ENCODE measurements at regions of chr2 and their contacts with region 1.

Region 1: GRCh38 chr2:224927646-224928173 is 114.6 kb downstream of the DOCK10 start:
- DNase-seq: peak; percentile 64
- H3K4me3 Mint-ChIP-seq: peak overlapping the region; percentile 46
- H3K27ac Mint-ChIP-seq: peak overlapping the region; percentile 99
- H3K4me1 Mint-ChIP-seq: peaks cover 93% of the 10 kb centered on the region
- H3K27me3 Mint-ChIP-seq: no peaks in the 10 kb centered on the region

Region 2: GRCh38 chr2:224520064-224520463 is 407.6 kb before region 1 on chr2:
- intact Hi-C with region 1: loop called (anchors 5 kb)
- DNase-seq: peak; percentile 26
- H3K4me3 Mint-ChIP-seq: no peak overlapping the region
- H3K27ac Mint-ChIP-seq: peak overlapping the region; percentile 70
- H3K4me1 Mint-ChIP-seq: peaks cover 54% of the 10 kb centered on the region
- H3K27me3 Mint-ChIP-seq: no peaks in the 10 kb centered on the region

Region 3: GRCh38 chr2:224904381-224904780 is 23.3 kb before region 1 on chr2:
- intact Hi-C with region 1: no loop called
- DNase-seq: no peak
- H3K4me3 Mint-ChIP-seq: no peak overlapping the region
- H3K27ac Mint-ChIP-seq: no peak overlapping the region
- H3K4me1 Mint-ChIP-seq: peaks cover 40% of the 10 kb centered on the region
- H3K27me3 Mint-ChIP-seq: no peaks in the 10 kb centered on the region

Region 4: DNA sequence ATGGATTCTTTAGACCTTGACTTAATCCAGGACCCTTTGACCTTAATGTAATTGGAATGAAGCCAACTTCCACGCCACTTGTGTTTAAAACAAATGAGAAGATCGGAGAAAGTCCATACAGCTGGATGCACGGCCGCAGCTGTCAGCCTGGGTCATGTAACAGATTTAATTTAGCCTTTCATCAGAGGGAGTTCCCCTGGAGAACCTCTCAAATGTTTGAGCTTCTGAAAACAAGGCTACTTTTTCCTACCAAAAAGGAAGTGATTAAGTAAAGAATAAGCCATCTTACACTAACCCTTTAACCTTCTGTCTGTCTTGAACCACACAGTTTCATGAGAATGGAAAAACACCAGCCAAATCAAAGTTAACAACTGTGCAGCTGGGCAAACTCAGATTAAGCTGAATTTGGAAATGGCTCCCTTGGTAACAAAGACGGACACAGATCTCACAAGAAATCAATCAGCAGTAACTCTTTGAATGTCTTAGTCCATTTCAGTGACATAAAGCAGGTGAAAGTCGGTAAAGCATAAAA is 11.0 kb after region 1 on chr2:
- intact Hi-C with region 1: loop called (anchors 1 kb)
- DNase-seq: no peak
- H3K4me3 Mint-ChIP-seq: peak overlapping the region; percentile 62
- H3K27ac Mint-ChIP-seq: peak overlapping the region; percentile 80
- H3K4me1 Mint-ChIP-seq: peaks cover 74% of the 10 kb centered on the region
- H3K27me3 Mint-ChIP-seq: no peaks in the 10 kb centered on the region

Region 5: GRCh38 chr2:225002039-225002655 is 74.4 kb after region 1 on chr2:
- intact Hi-C with region 1: loop called (anchors 1 kb)
- DNase-seq: peak; percentile 54
- H3K4me3 Mint-ChIP-seq: no peak overlapping the region
- H3K27ac Mint-ChIP-seq: peak overlapping the region; percentile 77
- H3K4me1 Mint-ChIP-seq: peaks cover 70% of the 10 kb centered on the region
- H3K27me3 Mint-ChIP-seq: no peaks in the 10 kb centered on the region

Region 6: GRCh38 chr2:225041851-225042799 is 114.4 kb after region 1 on chr2 and contains the start of gene DOCK10:
- intact Hi-C with region 1: loop called (anchors 2 kb)
- DNase-seq: peak; percentile 40
- H3K4me3 Mint-ChIP-seq: peak within 1 kb of the TSS; percentile 91
- H3K27ac Mint-ChIP-seq: peak within 1 kb of the TSS; percentile 92
- H3K4me1 Mint-ChIP-seq: peaks cover 54% of the 10 kb centered on the region
- H3K27me3 Mint-ChIP-seq: peaks cover 33% of the 10 kb centered on the region
- total RNA-seq, gene DOCK10: 100 and 107 TPM in 2 replicates

Region 7: DNA sequence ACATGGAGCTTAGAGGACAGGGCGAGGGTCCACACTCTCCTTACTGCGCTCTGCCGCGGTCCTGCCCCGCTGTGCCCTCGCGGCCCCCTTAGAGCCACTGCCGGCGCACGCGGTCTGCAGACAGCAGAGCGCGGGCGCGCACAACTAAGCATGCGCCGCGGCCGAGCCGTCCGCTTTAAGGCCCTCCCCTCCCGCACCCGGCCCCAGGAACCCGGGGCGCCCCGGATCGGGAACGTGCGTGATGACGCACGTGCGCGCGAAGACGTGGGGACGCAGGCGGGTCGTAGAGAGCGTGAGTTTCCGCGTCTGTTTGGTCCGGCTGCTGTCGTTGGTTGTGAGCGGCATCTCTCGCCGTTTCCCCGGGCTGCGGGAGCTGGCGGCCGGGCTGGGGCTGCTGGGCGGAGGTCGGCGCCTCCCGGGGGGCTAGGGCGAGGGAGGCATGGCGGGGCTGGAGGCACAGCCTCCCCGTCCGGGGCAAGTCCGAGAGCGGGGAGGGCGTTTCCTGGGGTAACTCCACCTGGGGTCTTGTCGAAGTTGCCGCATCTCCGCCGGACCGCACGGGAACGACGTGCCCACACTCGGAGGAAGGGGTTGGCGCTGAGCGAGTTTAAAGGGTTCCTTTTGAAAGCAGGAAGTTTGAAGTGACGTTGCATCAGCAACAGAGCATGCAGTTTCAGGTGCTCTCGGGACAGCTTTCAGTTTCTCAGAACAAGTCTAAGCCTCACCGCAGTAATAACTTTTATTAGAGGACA is 1908.3 kb after region 1 on chr2 and contains the start of gene RHBDD1:
- intact Hi-C with region 1: loop called (anchors 5 kb)
- DNase-seq: peak; percentile 92
- H3K4me3 Mint-ChIP-seq: peak within 1 kb of the TSS; percentile 92
- H3K27ac Mint-ChIP-seq: peak within 1 kb of the TSS; percentile 98
- H3K4me1 Mint-ChIP-seq: peaks cover 50% of the 10 kb centered on the region
- H3K27me3 Mint-ChIP-seq: no peaks in the 10 kb centered on the region
- total RNA-seq, gene RHBDD1: 40.9 and 42.2 TPM in 2 replicates